Transverse colon (tissue), 4 donors: ENCODE measurements at regions of chr12 and their contacts with region 1.

Region 1: GRCh38 chr12:33432992-33433391 is 6.6 kb downstream of the SYT10 start:
- DNase-seq: no peak
- H3K4me3 ChIP-seq: no peak overlapping the region
- H3K27ac ChIP-seq: no peak overlapping the region
- H3K4me1 ChIP-seq: no peaks in the 10 kb centered on the region
- H3K27me3 ChIP-seq: peaks cover 20% of the 10 kb centered on the region
- CTCF ChIP-seq: no peak
- EP300 ChIP-seq: no peak
- POLR2A ChIP-seq: no peak

Region 2: GRCh38 chr12:33455096-33455495 is 22.1 kb after region 1 on chr12:
- in situ Hi-C with region 1: no loop called
- intact Hi-C with region 1: loop called (anchors 1 kb)
- DNase-seq: no peak
- H3K4me3 ChIP-seq: no peak overlapping the region
- H3K27ac ChIP-seq: no peak overlapping the region
- H3K4me1 ChIP-seq: no peaks in the 10 kb centered on the region
- H3K27me3 ChIP-seq: no peaks in the 10 kb centered on the region
- CTCF ChIP-seq: no peak
- EP300 ChIP-seq: no peak
- POLR2A ChIP-seq: no peak

Region 3: DNA sequence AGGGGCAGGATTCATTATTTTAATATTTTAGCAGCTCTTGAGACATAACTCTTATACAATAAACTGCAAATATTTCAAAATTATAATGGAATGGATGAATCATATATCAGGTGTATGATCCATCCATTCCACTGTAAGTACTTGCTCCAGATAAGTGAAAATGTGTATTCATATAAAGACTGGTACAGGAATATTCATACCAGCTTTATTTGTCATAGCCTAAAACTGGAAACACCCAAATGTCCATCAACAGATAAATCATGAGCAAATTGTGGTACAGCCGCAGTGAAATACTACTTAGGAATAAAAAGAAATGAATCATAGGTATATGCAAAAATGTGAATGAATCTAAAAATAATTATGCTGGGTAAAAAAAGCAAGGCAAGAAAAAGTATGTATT is 270.2 kb after region 1 on chr12:
- in situ Hi-C with region 1: no loop called
- intact Hi-C with region 1: no loop called
- DNase-seq: no peak
- H3K4me3 ChIP-seq: no peak overlapping the region
- H3K27ac ChIP-seq: no peak overlapping the region
- H3K4me1 ChIP-seq: no peaks in the 10 kb centered on the region
- H3K27me3 ChIP-seq: no peaks in the 10 kb centered on the region
- CTCF ChIP-seq: no peak
- EP300 ChIP-seq: no peak
- POLR2A ChIP-seq: no peak